ENCODE measurements at regions of chr14 and their contacts with region 1.

Region 1: GRCh38 chr14:99793213-99794150 is at the start of gene EML1:
- DNase-seq: peak; percentile 76
- ATAC-seq: peak; percentile 91
- H3K4me3 ChIP-seq: peak within 1 kb of the TSS; percentile 91
- H3K27ac ChIP-seq: peak within 1 kb of the TSS; percentile 73
- H3K4me1 ChIP-seq: peaks cover 10% of the 10 kb centered on the region
- H3K27me3 ChIP-seq: no peaks in the 10 kb centered on the region
- CTCF ChIP-seq: peak; percentile 32
- POLR2A ChIP-seq: peak; percentile 81
- RAD21 ChIP-seq: no peak; the same call in none of the 2 replicates
- total RNA-seq, gene EML1: 34.4 and 42.3 TPM in 2 replicates

Region 2: DNA sequence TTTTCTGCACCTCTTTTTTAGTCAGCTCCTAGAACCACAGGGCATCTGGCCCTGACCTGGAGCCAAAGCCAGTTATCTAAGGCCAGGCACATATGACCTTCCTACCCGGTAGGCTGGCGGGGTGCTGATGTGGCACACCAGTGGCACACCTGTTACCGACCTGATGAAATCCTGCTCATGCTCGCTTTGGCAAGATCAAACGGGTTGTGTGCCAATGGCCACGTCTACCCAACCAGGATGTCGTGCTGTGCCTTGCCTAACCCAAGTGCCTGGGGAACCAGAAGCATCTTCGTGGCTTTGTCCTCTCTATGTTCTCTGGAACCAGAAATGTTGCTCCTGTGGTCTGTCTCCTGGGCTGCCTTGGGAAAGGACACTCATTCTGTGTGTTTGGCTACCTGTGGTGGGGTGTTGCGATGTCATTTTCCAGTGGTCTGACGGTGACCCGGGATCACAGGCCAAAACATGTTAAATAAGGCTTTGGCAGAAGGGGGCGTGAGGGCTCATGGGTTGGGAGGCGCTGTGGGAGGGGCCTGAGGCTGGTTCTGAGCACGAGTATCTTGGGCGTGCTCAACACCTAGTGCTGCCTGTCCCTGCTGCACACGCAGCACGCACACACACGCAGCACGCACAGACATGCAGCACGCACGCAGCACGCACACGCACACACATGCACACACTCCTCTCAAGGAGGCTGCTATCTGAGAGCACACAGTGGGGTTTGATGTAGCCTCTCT is 284.4 kb before region 1 on chr14:
- CTCF ChIA-PET with region 1: no interaction called
- POLR2A ChIA-PET with region 1: no interaction called
- dilution Hi-C with region 1: no loop called
- in situ Hi-C with region 1: no loop called
- intact Hi-C with region 1: no loop called
- DNase-seq: no peak
- ATAC-seq: no peak
- H3K4me3 ChIP-seq: no peak overlapping the region
- H3K27ac ChIP-seq: no peak overlapping the region
- H3K4me1 ChIP-seq: peaks cover 15% of the 10 kb centered on the region
- H3K27me3 ChIP-seq: no peaks in the 10 kb centered on the region
- CTCF ChIP-seq: no peak
- POLR2A ChIP-seq: no peak
- RAD21 ChIP-seq: no peak

Region 3: GRCh38 chr14:99683619-99684355 is 109.7 kb before region 1 on chr14 and contains the start of gene CYP46A1:
- CTCF ChIA-PET with region 1: no interaction called
- POLR2A ChIA-PET with region 1: no interaction called
- dilution Hi-C with region 1: no loop called
- in situ Hi-C with region 1: no loop called
- intact Hi-C with region 1: loop called (anchors 1 kb)
- DNase-seq: peak; percentile 99
- ATAC-seq: peak; percentile 97
- H3K4me3 ChIP-seq: peak within 1 kb of the TSS; percentile 88
- H3K27ac ChIP-seq: peak within 1 kb of the TSS; percentile 65
- H3K4me1 ChIP-seq: peaks cover 8% of the 10 kb centered on the region
- H3K27me3 ChIP-seq: peaks cover 29% of the 10 kb centered on the region
- CTCF ChIP-seq: no peak
- POLR2A ChIP-seq: no peak
- RAD21 ChIP-seq: no peak
- total RNA-seq, gene CYP46A1: under 0.01 and 0.18 TPM in 2 replicates

Region 4: DNA sequence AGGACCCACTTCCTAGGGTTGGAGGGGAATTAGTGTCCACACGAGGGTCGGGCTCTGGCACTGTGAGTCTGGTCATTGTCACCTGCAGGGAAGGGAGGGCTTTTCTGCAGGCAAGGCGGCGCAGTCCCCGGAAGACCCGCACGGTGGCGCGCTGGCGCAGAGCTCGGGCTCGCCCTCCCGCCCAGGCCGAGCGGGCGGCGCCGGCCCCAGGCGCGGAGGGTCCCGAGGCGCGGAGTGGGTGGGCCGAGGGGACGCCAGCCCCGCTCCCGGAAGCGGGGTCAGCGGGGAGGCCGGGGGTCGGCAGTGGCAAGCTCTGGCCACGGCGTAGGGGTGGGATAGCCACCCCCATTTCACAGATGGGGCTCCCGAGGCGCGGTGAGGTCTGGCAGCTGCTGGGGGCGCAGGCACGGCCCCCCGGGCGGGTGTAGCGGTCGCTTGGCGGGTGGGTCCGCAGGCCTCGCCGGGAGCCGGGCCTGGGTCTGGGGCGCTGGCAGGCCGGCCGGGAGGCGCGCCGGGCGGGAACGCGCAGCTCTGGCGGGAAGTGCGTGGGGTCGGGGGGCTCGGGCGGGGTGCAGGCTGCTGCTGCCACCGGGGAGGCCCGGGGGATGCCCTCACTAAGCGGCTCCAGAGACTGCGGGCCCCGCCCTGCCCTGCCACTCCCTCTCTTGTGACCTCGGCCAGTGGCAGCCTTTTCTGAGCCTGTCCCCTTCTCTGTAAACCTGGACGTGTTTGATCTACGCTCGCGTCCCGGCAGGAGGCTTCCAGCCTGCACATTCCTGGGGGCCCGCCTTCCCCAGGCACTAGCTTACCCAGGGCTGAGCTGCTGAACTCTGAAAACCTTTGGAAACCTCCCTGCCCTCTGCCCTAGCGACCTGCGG is 63.3 kb before region 1 on chr14:
- CTCF ChIA-PET with region 1: no interaction called
- POLR2A ChIA-PET with region 1: interaction called, 3 read pairs
- dilution Hi-C with region 1: no loop called
- in situ Hi-C with region 1: no loop called
- intact Hi-C with region 1: loop called (anchors 2 kb)
- DNase-seq: peak; percentile 19
- ATAC-seq: peak; percentile 98
- H3K4me3 ChIP-seq: peak overlapping the region; percentile 49
- H3K27ac ChIP-seq: no peak overlapping the region; the same call in 1 of the 2 replicates
- H3K4me1 ChIP-seq: peaks cover 3% of the 10 kb centered on the region; the same call in 1 of the 2 replicates
- H3K27me3 ChIP-seq: peaks cover 6% of the 10 kb centered on the region; the same call in 1 of the 2 replicates
- CTCF ChIP-seq: peak; percentile 91
- POLR2A ChIP-seq: no peak
- RAD21 ChIP-seq: peak; percentile 95

Region 5: GRCh38 chr14:99744199-99744879 is 49.1 kb before region 1 on chr14:
- CTCF ChIA-PET with region 1: interaction called, 3 read pairs
- POLR2A ChIA-PET with region 1: no interaction called
- dilution Hi-C with region 1: no loop called
- in situ Hi-C with region 1: no loop called
- intact Hi-C with region 1: loop called (anchors 2 kb)
- DNase-seq: peak; percentile 67
- ATAC-seq: peak; percentile 21
- H3K4me3 ChIP-seq: no peak overlapping the region
- H3K27ac ChIP-seq: peak overlapping the region; percentile 86
- H3K4me1 ChIP-seq: peaks cover 18% of the 10 kb centered on the region
- H3K27me3 ChIP-seq: no peaks in the 10 kb centered on the region
- CTCF ChIP-seq: 0 out of 2 replicates have a peak, but pooled peaks have one; percentile 22
- POLR2A ChIP-seq: no peak; the same call in 1 of the 2 replicates
- RAD21 ChIP-seq: peak; percentile 9; the same call in 1 of the 2 replicates

Region 6: DNA sequence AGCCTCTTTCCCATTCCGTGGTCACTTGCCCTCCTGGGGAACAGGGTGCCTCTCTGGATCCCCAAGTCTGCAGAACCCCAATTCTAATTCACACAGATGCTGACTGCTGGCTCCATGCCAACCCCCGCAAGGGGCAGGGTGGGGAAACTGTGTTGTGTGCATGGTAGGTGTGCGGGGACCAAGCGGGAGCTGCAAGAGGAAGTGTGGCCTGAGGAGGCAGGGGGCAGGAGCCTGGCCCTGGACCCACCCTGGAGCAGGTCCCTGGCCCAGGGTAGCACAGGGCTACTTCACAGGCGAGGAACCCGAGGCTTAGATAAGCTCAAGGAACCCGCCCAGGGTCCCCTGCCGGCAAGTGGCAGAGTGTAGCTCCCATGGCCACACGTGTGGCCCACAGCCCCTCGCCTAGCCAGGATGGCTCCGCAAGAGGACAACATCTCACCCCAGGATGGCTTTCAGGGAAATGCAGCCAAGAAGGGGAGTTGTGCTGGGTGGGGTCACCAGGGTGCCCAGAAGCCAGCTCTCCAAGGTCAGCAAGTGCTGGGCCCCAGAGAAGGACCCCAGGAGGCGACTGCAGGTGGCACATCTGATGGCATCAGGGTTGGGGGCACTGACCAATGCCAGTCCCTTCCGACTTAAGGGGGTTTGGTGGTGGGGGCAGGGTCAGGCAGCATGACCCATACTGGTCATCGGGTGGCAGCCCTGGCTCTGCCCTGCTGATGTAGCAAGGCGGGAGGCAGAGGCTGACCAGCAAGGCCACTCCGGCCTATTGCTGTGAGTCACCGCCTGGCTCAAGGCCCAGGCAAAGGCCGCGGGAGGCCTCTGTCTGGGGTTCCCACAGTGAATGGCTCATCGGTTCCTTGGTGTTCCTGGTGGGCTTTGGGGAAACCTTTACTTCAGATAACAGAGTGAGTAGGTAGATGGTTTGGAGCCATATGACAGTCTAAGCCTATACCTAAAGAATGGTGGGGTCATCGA is 37.6 kb before region 1 on chr14:
- CTCF ChIA-PET with region 1: interaction called, 3 read pairs
- POLR2A ChIA-PET with region 1: interaction called, 4 read pairs
- dilution Hi-C with region 1: no loop called
- in situ Hi-C with region 1: no loop called
- intact Hi-C with region 1: loop called (anchors 2 kb)
- DNase-seq: peak; percentile 95
- ATAC-seq: peak; percentile 59
- H3K4me3 ChIP-seq: no peak overlapping the region
- H3K27ac ChIP-seq: peak overlapping the region; percentile 51
- H3K4me1 ChIP-seq: peaks cover 69% of the 10 kb centered on the region
- H3K27me3 ChIP-seq: no peaks in the 10 kb centered on the region
- CTCF ChIP-seq: no peak
- POLR2A ChIP-seq: no peak
- RAD21 ChIP-seq: no peak

Region 7: GRCh38 chr14:99809360-99809759 is 15.9 kb after region 1 on chr14:
- CTCF ChIA-PET with region 1: interaction called, 4 read pairs
- POLR2A ChIA-PET with region 1: no interaction called
- dilution Hi-C with region 1: no loop called
- in situ Hi-C with region 1: no loop called
- intact Hi-C with region 1: loop called (anchors 2 kb)
- DNase-seq: peak; percentile 58
- ATAC-seq: peak; percentile 63
- H3K4me3 ChIP-seq: no peak overlapping the region
- H3K27ac ChIP-seq: no peak overlapping the region
- H3K4me1 ChIP-seq: peaks cover 16% of the 10 kb centered on the region
- H3K27me3 ChIP-seq: no peaks in the 10 kb centered on the region
- CTCF ChIP-seq: no peak
- POLR2A ChIP-seq: no peak
- RAD21 ChIP-seq: no peak

Region 8: GRCh38 chr14:99879401-99880295 is 86.2 kb after region 1 on chr14:
- CTCF ChIA-PET with region 1: interaction called, 3 read pairs
- POLR2A ChIA-PET with region 1: no interaction called
- dilution Hi-C with region 1: no loop called
- in situ Hi-C with region 1: no loop called
- intact Hi-C with region 1: loop called (anchors 5 kb)
- DNase-seq: peak; percentile 88
- ATAC-seq: peak; percentile 88
- H3K4me3 ChIP-seq: no peak overlapping the region
- H3K27ac ChIP-seq: peak overlapping the region; percentile 86; the same call in 1 of the 2 replicates
- H3K4me1 ChIP-seq: peaks cover 15% of the 10 kb centered on the region
- H3K27me3 ChIP-seq: no peaks in the 10 kb centered on the region
- CTCF ChIP-seq: no peak
- POLR2A ChIP-seq: no peak
- RAD21 ChIP-seq: peak; percentile 23; the same call in 1 of the 2 replicates